Calu3 (cell line): ENCODE measurements at regions of chr2 and their contacts with region 1.

Region 1: GRCh38 chr2:52810460-52810859 is 957.1 kb upstream of the CHAC2 start:
- DNase-seq: peak; percentile 9
- H3K4me3 Mint-ChIP-seq: no peak overlapping the region
- H3K27ac Mint-ChIP-seq: peak overlapping the region; percentile 14
- H3K4me1 Mint-ChIP-seq: peaks cover 12% of the 10 kb centered on the region
- H3K27me3 Mint-ChIP-seq: no peaks in the 10 kb centered on the region
- CTCF ChIP-seq: peak; percentile 36

Region 2: GRCh38 chr2:52956766-52957165 is 146.3 kb after region 1 on chr2:
- CTCF ChIA-PET with region 1: interaction called, 6 read pairs
- intact Hi-C with region 1: loop called (anchors 5 kb)
- DNase-seq: no peak
- H3K4me3 Mint-ChIP-seq: no peak overlapping the region
- H3K27ac Mint-ChIP-seq: no peak overlapping the region
- H3K4me1 Mint-ChIP-seq: no peaks in the 10 kb centered on the region
- H3K27me3 Mint-ChIP-seq: no peaks in the 10 kb centered on the region
- CTCF ChIP-seq: no peak

Region 3: DNA sequence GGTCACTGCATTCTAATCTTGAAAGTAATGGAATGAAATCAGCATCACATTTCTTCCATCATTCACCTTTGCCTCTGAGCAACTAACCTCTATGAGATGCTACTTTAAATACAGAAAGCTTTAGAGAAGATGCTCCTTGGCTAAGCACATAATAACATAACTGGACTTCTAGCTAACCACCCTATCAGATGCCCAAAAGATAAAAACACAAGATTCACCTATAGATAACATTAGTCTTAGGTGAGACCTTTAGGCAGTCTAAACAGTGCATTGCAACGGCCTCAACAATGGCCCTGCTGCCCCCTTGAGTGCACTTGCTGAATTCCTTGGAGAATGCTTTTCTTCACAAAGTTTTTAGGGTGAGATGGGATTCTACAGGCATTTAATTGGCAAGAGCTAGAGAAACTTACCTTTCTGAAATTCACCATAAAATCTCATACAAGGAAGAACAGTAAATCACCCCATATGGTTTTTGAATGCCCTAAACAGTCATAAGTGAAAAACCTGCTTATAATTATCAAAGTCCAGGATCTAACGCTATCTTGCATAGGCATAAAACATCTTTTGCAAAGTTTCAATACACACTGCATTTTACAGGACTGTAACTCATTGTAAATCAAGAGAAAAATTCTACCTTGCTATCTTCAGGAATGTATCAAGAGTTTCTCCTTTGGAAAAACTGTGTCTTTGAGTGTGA is 165.9 kb after region 1 on chr2:
- CTCF ChIA-PET with region 1: interaction called, 13 read pairs
- intact Hi-C with region 1: loop called (anchors 1 kb)
- DNase-seq: peak; percentile 55
- H3K4me3 Mint-ChIP-seq: no peak overlapping the region
- H3K27ac Mint-ChIP-seq: no peak overlapping the region
- H3K4me1 Mint-ChIP-seq: no peaks in the 10 kb centered on the region
- H3K27me3 Mint-ChIP-seq: no peaks in the 10 kb centered on the region
- CTCF ChIP-seq: peak; percentile 43

Region 4: DNA sequence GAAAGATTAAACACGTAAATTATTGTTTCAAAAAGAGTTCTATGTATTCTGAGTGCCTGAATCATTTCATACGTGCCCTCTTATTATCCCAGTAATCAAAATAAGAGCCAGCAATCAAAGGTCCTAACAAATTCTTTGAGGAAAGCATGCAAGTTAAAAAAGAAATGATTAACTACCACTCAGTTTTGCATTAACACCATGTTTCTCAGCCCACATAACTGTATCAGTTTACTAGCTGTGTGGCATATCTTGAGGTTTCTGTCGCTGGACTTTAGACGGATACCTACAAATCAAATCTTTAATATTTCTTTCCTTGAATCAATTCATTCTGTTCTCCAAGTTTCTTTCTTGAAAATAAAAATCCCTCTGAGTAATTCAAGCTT is 288.2 kb after region 1 on chr2:
- CTCF ChIA-PET with region 1: interaction called, 6 read pairs
- intact Hi-C with region 1: loop called (anchors 2 kb)
- DNase-seq: no peak
- H3K4me3 Mint-ChIP-seq: peak overlapping the region; percentile 59
- H3K27ac Mint-ChIP-seq: peak overlapping the region; percentile 88
- H3K4me1 Mint-ChIP-seq: peaks cover 53% of the 10 kb centered on the region
- H3K27me3 Mint-ChIP-seq: no peaks in the 10 kb centered on the region
- CTCF ChIP-seq: no peak

Region 5: GRCh38 chr2:53202063-53202462 is 391.6 kb after region 1 on chr2:
- CTCF ChIA-PET with region 1: interaction called, 15 read pairs
- intact Hi-C with region 1: loop called (anchors 1 kb)
- DNase-seq: peak; percentile 56
- H3K4me3 Mint-ChIP-seq: no peak overlapping the region
- H3K27ac Mint-ChIP-seq: peak overlapping the region; percentile 54
- H3K4me1 Mint-ChIP-seq: peaks cover 9% of the 10 kb centered on the region
- H3K27me3 Mint-ChIP-seq: no peaks in the 10 kb centered on the region
- CTCF ChIP-seq: no peak